ENCODE measurements at regions of chr19 and their contacts with region 1.

Region 1: DNA sequence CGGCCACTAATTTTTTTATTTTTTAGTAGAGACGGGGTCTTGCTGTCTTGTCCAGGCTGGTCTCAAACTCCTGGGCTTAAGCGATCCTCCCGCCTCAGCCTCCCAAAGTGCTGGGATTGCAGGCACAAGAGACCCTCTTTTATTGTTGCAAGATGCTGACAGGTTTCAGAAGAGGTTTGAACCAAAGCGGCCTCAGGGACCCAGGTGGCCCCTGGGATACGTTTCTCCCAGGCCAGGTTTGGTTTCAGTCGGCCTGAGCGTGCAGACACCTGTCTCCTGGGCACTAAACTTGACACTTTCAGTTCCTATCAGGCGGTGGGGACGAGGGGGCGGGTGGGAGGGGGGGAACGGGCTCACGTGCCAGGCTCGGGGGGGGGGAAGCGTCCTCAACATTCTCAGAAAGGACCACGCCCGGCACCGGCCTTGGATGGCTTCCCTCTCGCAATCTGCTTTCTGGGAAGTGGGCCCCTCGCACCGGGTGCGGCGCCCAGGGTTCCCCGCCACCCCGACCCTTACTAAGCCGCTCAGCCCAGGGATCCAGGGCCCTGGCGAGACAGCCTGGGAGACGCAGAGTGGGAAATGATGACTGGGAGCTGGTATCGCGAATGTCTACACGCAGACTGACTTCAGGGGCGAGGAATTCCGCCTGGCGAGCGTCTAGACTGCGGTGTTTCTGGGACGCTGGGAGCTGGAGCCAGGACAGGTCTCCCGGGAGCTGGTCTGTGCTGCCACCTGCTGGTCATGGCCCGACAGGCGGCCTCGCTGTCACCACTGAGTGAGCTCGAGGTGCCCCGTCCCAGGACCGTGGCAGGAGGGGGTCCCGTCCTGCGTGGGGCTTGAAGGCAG is 91.6 kb downstream of the GNG7 start:
- DNase-seq: peak; percentile 98
- ATAC-seq: peak; percentile 81
- H3K4me3 Mint-ChIP-seq: peak overlapping the region; percentile 61
- H3K27ac Mint-ChIP-seq: no peak overlapping the region
- H3K4me1 Mint-ChIP-seq: peaks cover 16% of the 10 kb centered on the region
- H3K27me3 Mint-ChIP-seq: peaks cover 17% of the 10 kb centered on the region
- CTCF ChIP-seq: peak; percentile 95

Region 2: DNA sequence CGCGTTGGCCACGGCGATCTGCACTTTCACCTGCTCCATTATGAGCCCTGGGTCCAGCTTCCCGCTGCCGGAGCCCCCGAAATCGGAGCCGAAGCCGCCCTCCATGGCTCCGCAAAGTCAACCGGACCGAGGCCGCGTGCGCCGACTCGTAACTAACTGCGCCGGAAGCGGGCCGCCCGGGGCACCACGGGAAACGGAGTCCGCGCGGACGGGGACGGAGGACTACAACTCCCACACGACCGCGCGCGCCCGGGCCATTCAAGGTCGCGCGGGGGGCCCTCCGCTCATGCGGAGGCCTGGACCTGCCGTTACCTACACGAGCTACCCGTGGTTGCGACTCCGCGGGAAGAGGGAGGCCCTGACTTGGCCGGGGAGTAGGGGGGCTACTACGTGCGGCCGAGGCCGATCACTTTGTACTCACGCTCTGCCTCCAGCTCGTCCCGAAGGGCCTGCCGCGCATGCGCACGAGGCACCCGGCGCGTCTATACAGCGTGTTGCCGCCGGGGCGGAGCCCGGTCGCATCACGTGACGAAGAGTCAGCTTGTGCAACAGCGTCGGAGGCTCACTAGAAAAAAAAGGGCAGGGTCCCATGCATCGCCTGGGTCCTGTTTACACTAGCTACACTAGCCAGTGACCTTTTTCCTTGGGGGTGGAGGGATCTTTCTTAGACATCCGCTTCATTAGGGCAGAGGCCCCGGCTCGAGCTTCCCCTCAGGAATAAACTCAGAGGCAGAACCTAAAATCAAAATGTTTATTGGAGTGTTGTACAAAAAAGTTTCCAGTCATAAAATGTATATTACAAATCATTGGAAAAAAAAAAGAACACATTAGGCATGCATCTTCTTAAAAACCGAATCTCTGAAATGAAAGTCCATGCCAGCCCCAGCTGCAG is 183.2 kb before region 1 on chr19 and contains the start of gene TIMM13:
- CTCF ChIA-PET with region 1: interaction called, 19 read pairs
- POLR2A ChIA-PET with region 1: interaction called, 4 read pairs
- DNase-seq: peak; percentile 97
- ATAC-seq: peak; percentile 50
- H3K4me3 Mint-ChIP-seq: peak within 1 kb of the TSS; percentile 88
- H3K27ac Mint-ChIP-seq: peak within 1 kb of the TSS; percentile 97
- H3K4me1 Mint-ChIP-seq: peaks cover 27% of the 10 kb centered on the region
- H3K27me3 Mint-ChIP-seq: no peaks in the 10 kb centered on the region
- CTCF ChIP-seq: no peak
- total RNA-seq, gene TIMM13: 296 to 342 TPM (median 309 TPM) in 3 replicates

Region 3: DNA sequence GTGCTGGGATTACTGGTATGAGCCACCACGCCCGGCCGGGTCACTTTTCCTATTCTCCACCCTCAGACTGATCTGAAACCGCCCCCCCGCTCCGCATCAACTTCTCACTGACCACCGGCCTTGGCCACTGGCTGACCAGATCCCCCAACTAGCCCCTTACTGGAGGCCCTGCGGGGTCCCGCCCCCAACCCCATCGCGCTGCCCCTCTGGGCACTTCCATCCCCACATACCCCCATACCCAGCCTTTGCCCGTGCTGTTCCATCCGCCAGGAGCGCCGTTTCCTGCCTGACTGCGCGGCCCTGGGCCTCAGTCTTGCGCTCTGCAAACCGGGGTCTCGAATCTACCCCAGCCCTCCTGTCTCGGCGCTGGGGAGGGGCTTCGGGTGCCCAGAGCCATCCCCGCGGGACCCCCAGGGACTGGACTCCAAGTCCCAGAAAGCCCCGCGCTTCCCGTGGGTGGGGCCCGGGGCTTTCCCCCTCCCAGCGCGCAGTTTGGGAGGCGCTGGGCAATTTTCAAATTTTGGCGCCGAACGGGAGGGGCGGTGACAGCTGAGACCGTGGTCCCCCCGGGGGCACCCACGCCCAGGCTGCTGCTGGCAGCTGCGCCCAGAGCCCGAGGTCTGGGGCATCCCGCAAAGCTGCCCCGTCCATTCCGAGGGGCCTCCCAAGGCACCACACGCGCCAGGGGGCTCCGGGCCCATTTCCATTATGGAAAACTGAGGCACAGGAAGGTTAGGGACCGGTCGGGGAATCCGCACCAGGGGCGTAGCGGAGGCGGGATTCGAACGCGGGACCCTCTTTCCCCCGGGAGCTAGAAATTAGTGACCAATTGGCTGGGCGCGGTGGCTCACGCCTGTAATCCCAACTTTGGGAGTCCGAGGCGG is 148.9 kb before region 1 on chr19:
- CTCF ChIA-PET with region 1: interaction called, 82 read pairs
- POLR2A ChIA-PET with region 1: interaction called, 3 read pairs
- DNase-seq: peak; percentile 78
- ATAC-seq: peak; percentile 61
- H3K4me3 Mint-ChIP-seq: peak overlapping the region; percentile 77
- H3K27ac Mint-ChIP-seq: no peak overlapping the region
- H3K4me1 Mint-ChIP-seq: peaks cover 9% of the 10 kb centered on the region; the same call in 1 of the 2 replicates
- H3K27me3 Mint-ChIP-seq: no peaks in the 10 kb centered on the region
- CTCF ChIP-seq: no peak

Region 4: DNA sequence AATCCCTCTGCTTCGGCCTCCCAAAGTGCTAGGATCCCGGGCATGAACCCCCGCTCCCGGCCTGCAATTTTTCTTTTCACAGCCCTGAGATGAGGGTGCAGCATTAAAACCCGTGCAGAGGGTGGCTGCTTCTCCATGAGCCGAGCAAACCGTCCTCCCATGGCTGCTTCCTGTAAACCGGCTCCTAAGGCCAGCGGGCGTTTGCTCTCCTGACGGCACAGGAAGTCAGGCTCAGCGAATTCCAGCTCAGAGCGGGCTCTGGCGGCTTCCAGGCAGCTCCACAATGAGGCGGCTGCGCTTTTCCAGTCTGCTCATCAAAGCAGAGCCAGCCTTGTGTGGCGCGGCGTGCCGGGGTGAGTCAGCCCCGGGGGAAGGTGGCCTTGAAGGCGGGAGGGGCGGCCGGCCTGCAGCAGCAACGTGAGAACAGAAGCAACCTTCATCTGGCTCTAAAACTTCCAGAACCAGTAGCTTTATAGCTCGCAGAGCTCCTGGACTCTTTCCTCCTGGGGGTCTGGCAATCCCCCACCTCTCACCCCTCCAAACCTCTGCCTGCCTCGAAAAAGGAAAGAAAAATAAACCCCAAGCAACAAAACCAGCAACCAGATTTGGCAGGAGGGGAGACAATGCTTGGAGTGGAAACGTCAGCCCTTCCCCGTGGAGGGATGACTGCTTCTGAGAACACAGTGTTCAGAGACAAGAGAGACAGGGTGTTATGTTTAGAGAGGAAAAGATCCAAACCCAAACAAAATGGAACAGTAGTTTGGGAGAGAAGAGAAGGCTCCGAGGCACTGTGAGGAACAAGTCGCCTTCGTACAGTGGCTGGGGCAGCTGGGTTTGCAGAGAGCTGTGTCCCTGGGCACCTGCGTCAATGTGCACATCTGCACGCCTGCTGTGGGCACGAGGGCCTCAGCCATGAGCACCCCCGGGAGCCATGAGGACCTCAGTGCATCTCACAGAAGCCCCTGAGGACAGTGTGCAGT is 67.1 kb before region 1 on chr19:
- CTCF ChIA-PET with region 1: interaction called, 38 read pairs
- POLR2A ChIA-PET with region 1: interaction called, 7 read pairs
- DNase-seq: peak; percentile 91
- ATAC-seq: peak; percentile 67
- H3K4me3 Mint-ChIP-seq: peak overlapping the region; percentile 34; the same call in 1 of the 2 replicates
- H3K27ac Mint-ChIP-seq: peak overlapping the region; percentile 97
- H3K4me1 Mint-ChIP-seq: peaks cover 41% of the 10 kb centered on the region
- H3K27me3 Mint-ChIP-seq: peaks cover 3% of the 10 kb centered on the region; the same call in 1 of the 2 replicates
- CTCF ChIP-seq: no peak

Region 5: GRCh38 chr19:2561895-2562294 is 49.0 kb before region 1 on chr19:
- CTCF ChIA-PET with region 1: interaction called, 10 read pairs
- POLR2A ChIA-PET with region 1: no interaction called
- DNase-seq: no peak
- ATAC-seq: no peak; the same call in 1 of the 2 replicates
- H3K4me3 Mint-ChIP-seq: no peak overlapping the region
- H3K27ac Mint-ChIP-seq: no peak overlapping the region; the same call in 1 of the 2 replicates
- H3K4me1 Mint-ChIP-seq: peaks cover 16% of the 10 kb centered on the region
- H3K27me3 Mint-ChIP-seq: no peaks in the 10 kb centered on the region
- CTCF ChIP-seq: no peak

Region 6: DNA sequence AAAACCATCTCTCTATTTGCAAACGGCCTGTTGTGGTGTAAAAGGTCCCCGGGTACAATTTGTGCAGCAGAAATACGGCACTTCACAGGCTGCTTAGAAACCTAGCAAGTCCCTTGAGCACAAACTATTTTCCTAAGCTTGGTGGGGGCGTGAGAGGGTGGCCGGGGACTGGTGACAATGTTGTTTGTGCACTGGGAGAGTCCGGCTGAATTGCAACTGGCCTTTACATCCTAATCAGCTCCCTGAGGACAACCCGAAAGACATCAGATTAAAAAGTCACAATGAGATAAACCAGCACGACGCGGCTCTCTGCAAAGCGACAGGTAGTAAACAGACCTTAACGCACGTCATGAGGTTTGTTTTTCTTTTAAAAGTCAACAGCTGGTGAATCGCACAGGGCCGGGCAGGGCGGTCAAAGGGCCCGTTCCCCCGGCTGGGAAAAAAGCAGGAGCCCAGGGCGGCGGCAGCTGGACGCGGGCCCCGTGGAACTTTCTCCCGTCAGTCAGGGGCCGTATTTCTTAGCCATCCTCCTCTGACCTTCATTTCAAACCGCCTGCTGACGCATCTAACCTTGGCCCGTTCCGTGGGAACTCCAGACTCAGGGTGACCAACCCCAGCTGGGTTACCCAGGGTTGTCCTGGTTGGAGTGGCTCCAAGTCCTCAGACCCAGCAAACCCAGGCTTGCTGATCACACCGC is 22.6 kb before region 1 on chr19:
- CTCF ChIA-PET with region 1: interaction called, 20 read pairs
- POLR2A ChIA-PET with region 1: no interaction called
- DNase-seq: no peak
- ATAC-seq: no peak
- H3K4me3 Mint-ChIP-seq: no peak overlapping the region
- H3K27ac Mint-ChIP-seq: no peak overlapping the region
- H3K4me1 Mint-ChIP-seq: peaks cover 43% of the 10 kb centered on the region
- H3K27me3 Mint-ChIP-seq: no peaks in the 10 kb centered on the region; the same call in none of the 2 replicates
- CTCF ChIP-seq: no peak

Region 7: DNA sequence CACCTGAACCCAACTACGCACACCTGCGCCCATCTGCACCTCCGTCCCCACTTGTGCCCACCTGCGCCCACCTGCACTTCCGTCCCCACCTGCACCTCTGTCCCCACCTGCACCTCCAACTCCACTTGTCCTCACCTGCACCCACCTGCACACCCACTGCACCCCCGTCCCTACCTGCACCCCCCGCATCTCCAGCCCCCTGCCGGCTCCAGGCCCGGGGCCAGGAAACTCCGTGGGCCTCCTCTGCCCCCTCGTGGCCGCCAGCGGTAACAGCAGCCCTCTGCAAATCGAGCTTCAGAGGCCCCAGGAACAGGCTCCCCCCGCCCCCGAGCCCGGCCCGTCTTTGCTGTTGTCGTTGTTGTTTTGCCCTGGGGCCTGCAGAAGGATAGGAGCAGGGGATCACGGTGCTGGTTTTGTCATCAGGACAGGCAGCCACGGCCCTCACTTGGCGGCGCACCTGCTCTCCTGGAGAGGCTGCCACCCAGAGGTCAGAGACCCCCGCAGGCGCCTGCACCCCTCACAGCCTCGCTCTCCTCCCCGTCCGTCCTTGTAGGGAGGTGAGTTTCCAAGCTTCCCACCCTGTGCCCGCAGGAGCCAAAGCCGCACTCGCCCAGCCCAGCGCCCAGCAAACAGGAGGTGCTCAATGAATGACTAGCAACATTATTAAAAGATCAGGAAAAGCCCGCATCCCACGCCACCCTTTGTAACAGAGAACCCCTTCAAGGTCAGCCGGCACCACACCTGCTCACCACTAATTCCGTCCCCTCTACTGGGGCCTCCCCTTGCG is 26.2 kb after region 1 on chr19:
- CTCF ChIA-PET with region 1: interaction called, 26 read pairs
- POLR2A ChIA-PET with region 1: no interaction called
- DNase-seq: peak; percentile 76
- ATAC-seq: peak; percentile 70
- H3K4me3 Mint-ChIP-seq: peak overlapping the region; percentile 63
- H3K27ac Mint-ChIP-seq: no peak overlapping the region
- H3K4me1 Mint-ChIP-seq: peaks cover 17% of the 10 kb centered on the region
- H3K27me3 Mint-ChIP-seq: no peaks in the 10 kb centered on the region; the same call in 1 of the 2 replicates
- CTCF ChIP-seq: peak; percentile 83; the same call in 1 of the 2 replicates

Region 8: DNA sequence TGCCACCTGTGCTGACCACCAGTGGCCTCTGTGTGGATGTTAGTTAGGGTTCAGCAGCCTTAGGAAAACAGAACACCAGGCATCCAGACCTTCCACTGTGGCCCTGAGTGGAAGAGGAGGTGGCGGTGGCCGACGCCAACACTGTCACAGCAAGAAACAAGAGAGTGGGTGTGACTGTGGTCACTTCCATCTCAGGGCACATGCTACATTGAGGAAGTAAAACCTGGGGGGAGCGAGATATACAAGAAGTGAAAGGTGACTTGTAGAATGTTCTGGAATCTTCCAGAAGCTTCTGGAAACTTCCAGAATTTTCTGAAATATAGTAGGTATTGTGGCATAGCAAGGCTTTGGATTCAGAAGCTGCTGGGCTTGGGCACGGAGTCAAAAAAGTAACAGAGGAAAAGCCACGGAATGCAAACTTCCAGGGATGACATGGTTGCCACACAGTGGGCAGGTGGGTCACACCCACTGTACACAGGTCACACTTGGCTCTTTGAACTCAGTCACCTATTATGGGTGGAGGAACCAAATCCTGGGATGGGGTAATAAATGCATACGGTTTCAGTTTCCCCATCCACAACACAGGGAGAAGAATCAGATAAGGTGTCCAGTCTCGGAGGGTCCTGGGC is 67.3 kb after region 1 on chr19:
- CTCF ChIA-PET with region 1: no interaction called
- POLR2A ChIA-PET with region 1: no interaction called
- DNase-seq: no peak
- ATAC-seq: no peak
- H3K4me3 Mint-ChIP-seq: no peak overlapping the region
- H3K27ac Mint-ChIP-seq: no peak overlapping the region
- H3K4me1 Mint-ChIP-seq: peaks cover 15% of the 10 kb centered on the region
- H3K27me3 Mint-ChIP-seq: no peaks in the 10 kb centered on the region
- CTCF ChIP-seq: no peak

Region 9: GRCh38 chr19:2722541-2723344 is 111.9 kb after region 1 on chr19:
- CTCF ChIA-PET with region 1: no interaction called
- POLR2A ChIA-PET with region 1: no interaction called
- DNase-seq: no peak
- ATAC-seq: no peak
- H3K4me3 Mint-ChIP-seq: no peak overlapping the region; the same call in 1 of the 2 replicates
- H3K27ac Mint-ChIP-seq: no peak overlapping the region
- H3K4me1 Mint-ChIP-seq: peaks cover 11% of the 10 kb centered on the region
- H3K27me3 Mint-ChIP-seq: peaks cover 5% of the 10 kb centered on the region; the same call in 1 of the 2 replicates
- CTCF ChIP-seq: no peak

Measured in WTC11 (cell line).